Calu3 (cell line): ENCODE measurements at regions of chr17 and their contacts with region 1.

Region 1: GRCh38 chr17:41801374-41802271 is 10.1 kb downstream of the P3H4 start:
- DNase-seq: peak; percentile 94
- H3K4me3 Mint-ChIP-seq: peak overlapping the region; percentile 43
- H3K27ac Mint-ChIP-seq: peak overlapping the region; percentile 87
- H3K4me1 Mint-ChIP-seq: peaks cover 38% of the 10 kb centered on the region
- H3K27me3 Mint-ChIP-seq: no peaks in the 10 kb centered on the region
- CTCF ChIP-seq: peak; percentile 99

Region 2: GRCh38 chr17:41223821-41224220 is 577.8 kb before region 1 on chr17:
- CTCF ChIA-PET with region 1: no interaction called
- intact Hi-C with region 1: no loop called
- DNase-seq: no peak
- H3K4me3 Mint-ChIP-seq: no peak overlapping the region
- H3K27ac Mint-ChIP-seq: no peak overlapping the region
- H3K4me1 Mint-ChIP-seq: no peaks in the 10 kb centered on the region
- H3K27me3 Mint-ChIP-seq: no peaks in the 10 kb centered on the region
- CTCF ChIP-seq: no peak

Region 3: GRCh38 chr17:41738077-41738735 is 63.4 kb before region 1 on chr17:
- CTCF ChIA-PET with region 1: interaction called, 15 read pairs
- intact Hi-C with region 1: loop called (anchors 1 kb)
- DNase-seq: peak; percentile 91
- H3K4me3 Mint-ChIP-seq: no peak overlapping the region
- H3K27ac Mint-ChIP-seq: no peak overlapping the region
- H3K4me1 Mint-ChIP-seq: peaks cover 19% of the 10 kb centered on the region
- H3K27me3 Mint-ChIP-seq: peaks cover 48% of the 10 kb centered on the region
- CTCF ChIP-seq: peak; percentile 100

Region 4: DNA sequence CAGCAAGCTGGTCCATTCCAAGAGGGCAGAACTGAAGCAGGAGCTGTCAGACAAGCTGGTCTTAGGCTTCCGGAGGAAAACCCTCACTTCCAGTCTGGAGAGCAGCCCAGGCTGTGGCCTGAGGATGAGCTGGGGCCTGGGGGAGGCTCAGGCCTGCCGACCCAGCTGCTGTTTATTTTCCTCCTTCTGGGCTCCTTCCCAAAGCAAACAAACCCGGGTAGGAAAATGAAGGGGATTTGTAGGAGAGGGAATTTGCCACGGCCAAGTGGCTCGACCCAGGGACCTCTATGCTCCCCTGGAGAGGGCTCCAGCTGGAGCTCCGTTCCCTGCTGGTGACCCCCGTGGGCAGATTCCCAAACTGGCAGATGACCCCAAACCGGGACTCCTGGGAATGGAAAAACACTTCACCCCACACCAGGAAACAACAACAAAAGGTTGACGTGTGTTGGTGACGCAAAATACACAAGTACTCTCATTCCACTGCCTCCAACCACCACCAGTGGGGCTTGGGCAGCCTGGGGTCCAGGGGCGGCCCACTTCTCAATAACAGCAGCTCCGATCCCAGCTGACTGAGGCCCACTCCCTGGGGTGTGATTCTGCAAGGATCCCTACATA is 23.9 kb before region 1 on chr17:
- CTCF ChIA-PET with region 1: interaction called, 16 read pairs
- intact Hi-C with region 1: loop called (anchors 1 kb)
- DNase-seq: peak; percentile 50
- H3K4me3 Mint-ChIP-seq: peak overlapping the region; percentile 43
- H3K27ac Mint-ChIP-seq: peak overlapping the region; percentile 87
- H3K4me1 Mint-ChIP-seq: peaks cover 86% of the 10 kb centered on the region
- H3K27me3 Mint-ChIP-seq: no peaks in the 10 kb centered on the region
- CTCF ChIP-seq: no peak

Region 5: DNA sequence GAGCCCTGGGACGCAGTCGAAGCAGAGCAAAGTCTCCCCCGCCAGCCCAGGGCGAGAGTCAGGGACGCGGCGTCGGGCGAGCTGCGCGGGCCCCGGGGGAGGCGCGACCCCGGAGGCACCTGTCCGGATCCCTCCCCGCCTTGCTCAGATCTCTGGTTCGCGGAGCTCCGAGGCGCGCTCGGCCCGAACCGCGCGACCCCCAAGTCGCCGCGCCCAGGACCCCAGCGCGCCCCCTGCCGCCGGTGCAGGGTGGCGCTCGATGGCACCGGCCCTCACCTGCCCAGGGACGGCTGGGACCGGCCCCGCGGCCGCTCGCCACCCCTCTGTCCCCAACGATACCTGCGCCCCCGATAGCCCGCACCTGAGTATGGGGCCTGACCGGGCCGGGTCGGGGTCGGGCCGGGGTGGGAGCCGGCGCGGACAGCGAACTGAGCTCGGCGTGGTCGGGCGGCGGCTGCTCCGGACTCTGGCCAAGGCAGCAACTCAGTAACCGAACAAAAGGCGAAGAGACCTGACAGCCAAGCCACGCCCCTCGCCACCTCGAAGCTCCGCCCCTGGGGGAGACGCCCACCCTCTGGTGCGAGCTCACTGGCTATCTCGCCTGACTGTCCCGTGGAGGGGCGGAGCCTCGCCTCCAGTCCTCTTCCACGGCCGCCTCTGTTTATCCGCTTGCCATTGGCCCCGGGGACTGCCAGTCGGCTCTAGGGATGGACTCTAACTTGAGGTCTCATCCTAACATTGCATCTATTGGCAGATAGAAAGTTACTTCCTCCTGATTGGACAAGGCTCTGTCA is 15.2 kb before region 1 on chr17 and contains the start of gene JUP:
- CTCF ChIA-PET with region 1: interaction called, 141 read pairs
- intact Hi-C with region 1: loop called (anchors 1 kb)
- DNase-seq: peak; percentile 100
- H3K4me3 Mint-ChIP-seq: peak within 1 kb of the TSS; percentile 95
- H3K27ac Mint-ChIP-seq: peak within 1 kb of the TSS; percentile 93
- H3K4me1 Mint-ChIP-seq: peaks cover 40% of the 10 kb centered on the region
- H3K27me3 Mint-ChIP-seq: no peaks in the 10 kb centered on the region
- CTCF ChIP-seq: peak; percentile 97
- total RNA-seq, gene JUP: 695 and 705 TPM in 2 replicates

Region 6: GRCh38 chr17:41811549-41812380 is 10.1 kb after region 1 on chr17 and contains the start of gene P3H4:
- CTCF ChIA-PET with region 1: interaction called, 13 read pairs
- intact Hi-C with region 1: no loop called
- DNase-seq: peak; percentile 89
- H3K4me3 Mint-ChIP-seq: peak within 1 kb of the TSS; percentile 86
- H3K27ac Mint-ChIP-seq: peak within 1 kb of the TSS; percentile 72
- H3K4me1 Mint-ChIP-seq: peaks cover 32% of the 10 kb centered on the region
- H3K27me3 Mint-ChIP-seq: no peaks in the 10 kb centered on the region
- CTCF ChIP-seq: peak; percentile 76
- total RNA-seq, gene P3H4: 19.9 and 22.5 TPM in 2 replicates

Region 7: GRCh38 chr17:41835800-41836549 is 34.4 kb after region 1 on chr17 and contains the start of gene NT5C3B:
- CTCF ChIA-PET with region 1: no interaction called
- intact Hi-C with region 1: no loop called
- DNase-seq: peak; percentile 77
- H3K4me3 Mint-ChIP-seq: peak within 1 kb of the TSS; percentile 81
- H3K27ac Mint-ChIP-seq: peak within 1 kb of the TSS; percentile 33
- H3K4me1 Mint-ChIP-seq: peaks cover 18% of the 10 kb centered on the region
- H3K27me3 Mint-ChIP-seq: no peaks in the 10 kb centered on the region
- CTCF ChIP-seq: no peak
- total RNA-seq, gene NT5C3B: 62.0 and 65.2 TPM in 2 replicates